AG04450 (cell line): ENCODE measurements at regions of chr1 and their contacts with region 1.

Region 1: DNA sequence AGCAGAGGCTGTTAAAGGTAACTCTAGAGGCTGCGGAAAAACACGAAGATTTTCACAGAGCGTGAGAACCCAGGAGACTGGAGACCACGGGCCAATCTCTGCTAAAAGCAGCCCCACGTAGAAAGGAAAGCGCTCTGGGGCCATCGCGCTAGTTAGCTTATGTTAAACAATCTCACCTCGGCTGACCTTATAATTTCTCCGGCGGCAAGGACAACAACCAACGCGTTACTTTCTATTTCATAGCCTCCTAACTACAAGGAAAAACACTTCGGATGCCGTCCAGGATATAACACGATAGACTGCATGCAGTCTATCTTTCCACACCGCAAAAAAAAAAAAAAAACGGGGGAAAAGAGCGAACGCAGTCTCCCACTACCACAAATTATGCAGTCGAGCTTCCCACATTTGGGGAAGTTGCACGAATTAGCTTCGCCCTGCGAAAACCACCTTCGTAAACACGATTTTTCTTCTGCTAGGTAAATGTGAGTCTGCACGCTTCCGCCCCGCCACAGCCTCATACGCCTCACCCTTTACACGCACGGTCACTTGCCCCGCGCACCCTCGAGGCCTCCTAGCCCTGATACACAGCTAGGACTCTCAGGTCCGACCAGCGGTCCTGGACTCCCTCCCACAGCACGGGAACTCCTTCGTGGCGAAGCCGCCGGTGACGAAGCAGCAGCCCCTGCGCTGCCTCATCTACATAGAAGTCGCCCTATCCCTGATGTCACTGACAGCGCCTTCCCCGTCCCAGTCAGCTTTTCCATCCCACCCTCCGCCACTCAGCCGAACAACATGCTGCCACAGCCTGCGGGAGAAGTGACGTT is 87.8 kb downstream of the PRKAB2 start:
- DNase-seq: peak; percentile 46
- H3K4me3 ChIP-seq: peak overlapping the region; percentile 66
- H3K27ac ChIP-seq: no peak overlapping the region
- H3K27me3 ChIP-seq: peaks cover 47% of the 10 kb centered on the region
- CTCF ChIP-seq: no peak

Region 2: DNA sequence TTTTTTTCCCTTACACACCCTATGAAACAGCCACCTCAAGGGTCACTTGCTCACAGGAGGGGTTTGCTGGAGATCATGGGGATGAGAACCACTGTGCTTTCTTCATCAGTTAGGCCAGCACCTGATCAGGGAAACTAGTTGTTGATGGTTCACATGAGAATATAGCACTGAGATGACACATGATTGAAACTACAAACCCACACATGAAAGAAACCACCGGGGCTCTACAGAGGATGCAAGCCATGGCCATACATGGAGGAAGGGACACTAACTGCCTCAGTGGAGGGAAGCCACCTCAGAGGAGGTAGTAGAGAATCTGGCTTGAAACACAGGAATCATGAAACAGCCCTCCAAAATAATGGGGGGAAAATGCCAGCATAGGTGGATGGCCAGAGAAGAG is 24.6 kb after region 1 on chr1:
- CTCF ChIA-PET with region 1: no interaction called
- POLR2A ChIA-PET with region 1: no interaction called
- DNase-seq: no peak
- H3K4me3 ChIP-seq: no peak overlapping the region
- H3K27ac ChIP-seq: no peak overlapping the region
- H3K27me3 ChIP-seq: no peaks in the 10 kb centered on the region
- CTCF ChIP-seq: no peak

Region 3: DNA sequence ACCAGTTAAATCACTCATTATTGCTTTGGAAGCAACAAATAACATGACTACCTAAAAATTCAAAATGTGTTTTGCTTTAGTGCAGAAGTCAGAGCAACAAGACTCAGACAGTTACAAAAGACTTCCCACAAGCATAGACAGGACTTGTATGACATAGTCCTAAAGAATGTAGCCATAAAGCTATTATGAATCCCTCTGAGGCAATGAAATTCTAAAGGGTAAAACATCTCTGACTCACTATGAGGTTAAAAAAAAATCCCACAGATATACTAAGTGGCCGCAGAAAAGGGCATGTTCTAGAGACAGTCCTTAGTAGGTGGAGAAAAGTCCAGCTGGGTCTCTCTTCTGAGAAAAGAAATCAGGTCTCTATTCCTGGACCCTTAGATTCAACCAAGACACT is 82.9 kb after region 1 on chr1:
- CTCF ChIA-PET with region 1: no interaction called
- POLR2A ChIA-PET with region 1: interaction called, 10 read pairs
- DNase-seq: peak; percentile 76
- H3K4me3 ChIP-seq: no peak overlapping the region
- H3K27ac ChIP-seq: peak overlapping the region; percentile 90
- H3K27me3 ChIP-seq: no peaks in the 10 kb centered on the region
- CTCF ChIP-seq: no peak